Uterus (tissue), 4 donors: ENCODE measurements at regions of chr14 and their contacts with region 1.

Region 1: DNA sequence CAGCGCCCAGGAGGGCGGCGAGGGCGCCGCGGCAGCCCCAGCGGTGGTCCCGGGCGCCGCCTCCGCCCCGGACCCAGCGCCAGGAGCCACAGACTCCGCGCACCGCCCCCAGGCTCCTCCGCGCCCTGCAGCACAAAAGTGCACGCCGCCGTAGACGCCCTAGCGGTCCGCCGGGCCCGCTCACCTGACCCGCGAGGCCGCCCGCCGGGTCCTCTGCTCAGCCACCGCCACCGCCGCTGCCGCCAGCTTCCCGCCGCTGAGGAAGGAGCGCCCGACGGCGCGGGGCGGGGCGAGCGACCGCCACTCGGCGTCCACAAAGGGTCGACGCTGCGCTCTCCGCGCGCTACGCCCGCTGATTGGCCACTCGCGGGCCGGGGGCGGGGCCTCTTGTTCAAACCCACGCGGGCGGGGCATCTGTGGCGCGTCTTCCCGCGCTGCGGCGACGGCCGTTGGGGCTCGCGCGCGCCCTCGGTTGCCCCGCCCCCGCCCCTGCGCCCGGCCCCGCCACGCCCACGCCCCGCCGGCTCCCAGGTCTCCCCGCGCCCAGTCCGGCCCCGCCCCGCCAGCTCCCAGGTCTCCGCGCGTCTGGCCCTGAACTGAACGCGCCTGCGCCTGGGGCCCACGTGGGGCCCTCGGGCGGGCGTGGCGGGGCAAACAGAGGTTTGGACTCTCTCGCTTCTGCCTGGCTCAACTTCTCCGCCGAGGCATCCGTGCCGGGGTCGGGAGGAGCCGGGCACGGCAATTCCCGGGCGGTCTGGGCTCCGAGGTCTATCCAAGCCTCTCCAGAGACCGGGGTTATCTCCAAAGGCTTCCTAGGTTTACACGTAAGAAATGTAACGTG is at the start of gene CDCA4:
- DNase-seq: peak; percentile 96 to 98
- H3K4me3 ChIP-seq: peak within 1 kb of the TSS; percentile 67 to 95
- H3K27ac ChIP-seq: peak within 1 kb of the TSS; percentile 74 to 82
- H3K4me1 ChIP-seq: peaks cover 0 to 12% of the 10 kb centered on the region in 2 donors
- H3K27me3 ChIP-seq: no peaks in the 10 kb centered on the region
- CTCF ChIP-seq: peak in 2 of 4 experiments; percentile 21 to 45
- POLR2A ChIP-seq: peak; percentile 73 to 81
- total RNA-seq, gene CDCA4: 2.3 to 43.3 (median 10.3) TPM

Region 2: DNA sequence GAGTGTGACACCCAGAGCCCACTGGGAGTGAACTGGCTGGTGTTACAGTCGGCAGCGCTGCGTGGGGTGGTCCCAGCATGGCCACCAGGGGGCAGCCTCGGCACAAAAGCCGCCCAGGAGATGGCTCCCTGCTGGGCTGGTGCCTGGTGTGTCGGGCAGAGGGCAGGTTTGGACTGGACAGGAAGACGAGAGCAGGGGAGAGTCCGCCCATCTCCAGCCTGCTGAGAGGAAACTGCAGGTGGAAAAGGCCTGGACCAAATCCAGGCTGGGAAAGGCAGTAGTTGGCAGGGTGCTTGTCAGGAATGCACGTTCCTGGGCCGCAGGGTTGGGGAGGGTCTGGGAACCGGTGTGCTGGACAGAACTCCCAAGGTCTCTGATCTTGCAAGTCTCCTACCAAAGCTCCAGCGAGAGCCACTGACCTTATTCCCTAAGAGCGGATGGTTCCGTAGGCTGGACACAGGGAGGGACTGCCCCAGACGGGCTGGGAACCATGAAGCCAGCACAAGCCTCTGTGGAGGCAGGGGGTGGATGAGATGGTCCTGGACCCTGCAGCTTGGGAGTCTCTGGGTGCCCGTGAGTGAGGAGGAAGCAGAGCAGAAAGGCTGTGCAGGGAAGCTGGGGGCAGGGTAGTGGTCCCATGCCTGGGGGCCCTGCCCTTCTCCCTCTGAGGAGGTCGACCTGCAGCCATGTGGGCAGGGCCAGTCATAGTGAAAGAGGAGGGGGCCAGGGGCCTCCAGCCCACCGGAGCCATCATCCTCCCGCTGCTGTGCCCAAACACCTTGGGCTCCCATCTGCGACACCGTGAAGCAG is 44.6 kb before region 1 on chr14:
- intact Hi-C with region 1: loop called (anchors 5 kb)
- DNase-seq: peak; percentile 78 to 79
- H3K4me3 ChIP-seq: no peak overlapping the region
- H3K27ac ChIP-seq: peak overlapping the region; percentile 7 to 95
- H3K4me1 ChIP-seq: peaks cover 25 to 53% of the 10 kb centered on the region in 2 donors
- H3K27me3 ChIP-seq: no peaks in the 10 kb centered on the region
- CTCF ChIP-seq: peak; percentile 83 to 90 (median 87)
- POLR2A ChIP-seq: no peak